ENCODE measurements at regions of chr6 and their contacts with region 1.

Region 1: GRCh38 chr6:158518191-158519127 is 41.4 kb upstream of the TMEM181 start:
- DNase-seq: peak; percentile 90
- H3K4me3 Mint-ChIP-seq: peak overlapping the region; percentile 91
- H3K27ac Mint-ChIP-seq: peak overlapping the region; percentile 90
- H3K4me1 Mint-ChIP-seq: peaks cover 27% of the 10 kb centered on the region
- H3K27me3 Mint-ChIP-seq: peaks cover 16% of the 10 kb centered on the region

Region 2: DNA sequence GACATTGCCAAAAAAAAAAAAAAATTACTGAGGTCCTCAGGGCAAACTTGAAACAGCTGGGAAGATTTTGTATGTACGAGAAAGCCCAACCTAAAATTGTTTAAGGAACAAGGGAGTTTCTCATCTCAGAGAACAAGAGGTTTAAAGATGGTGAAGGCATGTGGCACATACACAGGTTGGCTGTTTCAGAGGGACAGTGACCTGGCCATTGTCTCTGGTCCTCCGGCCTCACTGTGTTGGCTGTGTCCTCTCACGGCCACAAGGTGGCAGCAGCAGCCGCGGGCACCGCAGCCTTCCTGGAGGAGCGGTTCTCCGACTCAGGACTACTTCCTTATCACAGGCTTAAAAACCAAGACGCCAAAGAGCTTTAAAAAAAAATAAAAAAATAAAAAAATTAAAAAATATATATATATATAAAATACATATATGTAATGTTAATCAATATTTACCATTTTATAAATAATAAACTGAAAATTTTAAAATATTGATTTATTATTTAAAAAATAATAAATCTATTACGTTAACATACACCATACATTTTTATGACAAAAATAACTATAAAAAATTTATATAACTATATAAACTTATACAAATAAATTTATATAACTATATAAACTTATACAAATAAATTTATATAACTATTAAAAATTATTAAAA is 297.5 kb before region 1 on chr6:
- intact Hi-C with region 1: loop called (anchors 1 kb)
- DNase-seq: peak; percentile 93
- H3K4me3 Mint-ChIP-seq: no peak overlapping the region
- H3K27ac Mint-ChIP-seq: no peak overlapping the region
- H3K4me1 Mint-ChIP-seq: peaks cover 2% of the 10 kb centered on the region
- H3K27me3 Mint-ChIP-seq: no peaks in the 10 kb centered on the region

Region 3: DNA sequence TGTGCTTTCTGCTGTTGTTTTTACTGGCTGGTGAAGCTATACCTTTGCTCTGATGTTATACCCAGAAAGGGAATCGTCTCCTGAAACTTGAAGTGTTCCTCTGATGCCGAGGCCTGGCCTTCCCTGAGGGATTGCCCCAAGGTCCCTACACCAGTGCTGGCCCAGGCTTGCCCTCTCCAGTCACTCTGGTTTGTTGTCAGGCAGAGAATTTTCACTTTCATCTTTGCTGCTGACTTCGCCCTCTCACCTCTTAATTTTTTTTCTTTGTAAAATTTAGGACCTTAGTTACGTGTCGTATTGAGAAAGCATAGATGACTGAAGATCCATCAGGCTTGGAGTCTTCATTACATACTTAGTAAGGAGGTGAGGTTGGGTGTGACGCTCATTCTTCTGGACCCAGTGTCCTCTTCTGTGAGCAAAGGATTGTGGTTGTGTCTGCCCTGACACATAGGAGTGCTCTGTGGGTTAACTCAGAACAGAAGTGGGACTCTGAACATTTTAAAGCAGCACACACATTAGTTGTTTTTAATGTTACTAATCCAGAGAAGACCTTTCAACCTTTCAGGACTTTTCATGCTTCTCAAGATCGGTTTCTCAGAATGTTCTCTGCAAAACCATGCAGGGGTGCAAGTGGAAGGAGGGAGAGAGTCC is 160.8 kb before region 1 on chr6:
- intact Hi-C with region 1: loop called (anchors 10 kb)
- DNase-seq: peak; percentile 61
- H3K4me3 Mint-ChIP-seq: no peak overlapping the region
- H3K27ac Mint-ChIP-seq: peak overlapping the region; percentile 2
- H3K4me1 Mint-ChIP-seq: peaks cover 27% of the 10 kb centered on the region
- H3K27me3 Mint-ChIP-seq: no peaks in the 10 kb centered on the region

Region 4: DNA sequence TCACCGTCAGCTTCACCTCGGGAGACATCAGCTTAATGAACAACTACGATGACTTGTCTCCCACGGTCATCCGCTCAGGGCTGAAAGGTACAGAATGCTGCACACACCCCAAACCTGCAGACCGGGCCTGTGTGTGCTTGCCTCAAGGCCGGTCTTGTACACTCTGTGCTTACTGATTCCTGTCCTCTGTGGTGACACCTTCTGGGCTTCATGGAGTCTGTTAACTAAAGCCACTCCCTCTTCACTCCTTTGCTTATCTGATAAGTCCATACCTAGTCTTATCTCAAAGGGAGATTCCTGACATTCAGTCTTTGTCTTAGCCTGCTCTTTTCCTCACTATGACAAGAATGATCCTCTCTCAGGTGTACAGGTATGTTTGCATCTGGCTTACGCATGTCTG is 66.3 kb before region 1 on chr6:
- intact Hi-C with region 1: no loop called
- DNase-seq: no peak
- H3K4me3 Mint-ChIP-seq: no peak overlapping the region
- H3K27ac Mint-ChIP-seq: no peak overlapping the region
- H3K4me1 Mint-ChIP-seq: no peaks in the 10 kb centered on the region
- H3K27me3 Mint-ChIP-seq: no peaks in the 10 kb centered on the region

Region 5: GRCh38 chr6:158548418-158549161 is 30.1 kb after region 1 on chr6:
- intact Hi-C with region 1: no loop called
- DNase-seq: no peak
- H3K4me3 Mint-ChIP-seq: no peak overlapping the region
- H3K27ac Mint-ChIP-seq: no peak overlapping the region
- H3K4me1 Mint-ChIP-seq: peaks cover 2% of the 10 kb centered on the region
- H3K27me3 Mint-ChIP-seq: peaks cover 12% of the 10 kb centered on the region